WTC11 (cell line): ENCODE measurements at regions of chr16 and their contacts with region 1.

Region 1: GRCh38 chr16:85253084-85253941 is 141.0 kb upstream of the CIBAR2 start:
- DNase-seq: peak; percentile 87
- ATAC-seq: peak; percentile 91
- H3K4me3 Mint-ChIP-seq: no peak overlapping the region
- H3K27ac Mint-ChIP-seq: no peak overlapping the region
- H3K4me1 Mint-ChIP-seq: no peaks in the 10 kb centered on the region
- H3K27me3 Mint-ChIP-seq: no peaks in the 10 kb centered on the region; the same call in 1 of the 2 replicates
- CTCF ChIP-seq: peak; percentile 99

Region 2: GRCh38 chr16:85004559-85005205 is 248.6 kb before region 1 on chr16:
- CTCF ChIA-PET with region 1: no interaction called
- POLR2A ChIA-PET with region 1: no interaction called
- DNase-seq: no peak
- ATAC-seq: no peak
- H3K4me3 Mint-ChIP-seq: no peak overlapping the region
- H3K27ac Mint-ChIP-seq: peak overlapping the region; percentile 30; the same call in 1 of the 2 replicates
- H3K4me1 Mint-ChIP-seq: peaks cover 32% of the 10 kb centered on the region
- H3K27me3 Mint-ChIP-seq: no peaks in the 10 kb centered on the region
- CTCF ChIP-seq: no peak

Region 3: GRCh38 chr16:85187002-85187401 is 66.3 kb before region 1 on chr16:
- CTCF ChIA-PET with region 1: interaction called, 18 read pairs
- POLR2A ChIA-PET with region 1: no interaction called
- DNase-seq: no peak
- ATAC-seq: peak; percentile 55
- H3K4me3 Mint-ChIP-seq: no peak overlapping the region
- H3K27ac Mint-ChIP-seq: peak overlapping the region; percentile 78; the same call in 1 of the 2 replicates
- H3K4me1 Mint-ChIP-seq: 0 out of 2 replicates have a peak, but pooled peaks cover 9% of the 10 kb centered on the region
- H3K27me3 Mint-ChIP-seq: peaks cover 2% of the 10 kb centered on the region; the same call in 1 of the 2 replicates
- CTCF ChIP-seq: no peak

Region 4: DNA sequence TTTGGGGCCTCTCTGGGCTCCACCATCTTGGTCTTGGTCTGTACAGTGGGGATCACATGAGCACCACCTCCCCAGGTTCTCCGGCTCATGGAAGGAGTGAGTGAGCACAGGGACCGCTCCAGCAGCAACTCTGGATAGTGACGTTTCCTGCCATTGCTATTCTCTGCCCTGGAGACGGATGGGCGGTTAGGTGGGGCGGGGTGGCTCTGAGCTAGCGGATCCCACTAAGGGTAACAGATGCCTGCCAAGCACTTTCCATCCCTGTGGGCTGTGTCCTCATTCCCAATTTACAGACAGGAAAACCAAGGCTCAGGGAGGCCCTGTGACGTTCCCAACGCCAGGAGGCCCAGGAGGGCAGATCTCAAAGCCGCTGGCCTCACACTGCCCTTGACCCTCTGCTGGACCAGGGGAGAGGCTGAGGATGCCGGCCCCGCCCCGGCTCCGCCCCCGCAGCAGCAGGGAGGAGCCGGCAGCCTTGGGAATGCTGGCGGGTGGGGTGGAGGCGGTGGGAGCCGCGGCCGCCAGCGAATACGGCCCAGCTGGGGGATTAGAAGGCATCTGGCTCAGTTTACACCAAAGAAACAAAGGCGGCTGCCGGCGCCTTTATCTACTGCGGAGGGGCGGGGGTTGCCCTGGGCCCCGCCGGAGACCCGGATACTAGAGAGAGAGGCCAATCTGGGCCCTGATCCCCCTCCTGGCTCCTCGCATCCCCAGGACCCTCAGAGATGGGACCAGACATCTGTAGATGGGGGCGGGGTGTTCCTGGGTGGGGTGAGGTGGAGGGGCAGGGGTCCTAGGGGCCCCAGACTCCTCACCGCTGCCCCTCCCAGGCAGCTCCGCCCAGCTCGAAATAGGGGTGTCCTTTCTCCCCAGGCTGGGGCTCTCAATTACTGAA is 18.8 kb before region 1 on chr16:
- CTCF ChIA-PET with region 1: interaction called, 37 read pairs
- POLR2A ChIA-PET with region 1: interaction called, 3 read pairs
- DNase-seq: peak; percentile 92
- ATAC-seq: peak; percentile 70
- H3K4me3 Mint-ChIP-seq: peak overlapping the region; percentile 58
- H3K27ac Mint-ChIP-seq: peak overlapping the region; percentile 87
- H3K4me1 Mint-ChIP-seq: peaks cover 37% of the 10 kb centered on the region
- H3K27me3 Mint-ChIP-seq: no peaks in the 10 kb centered on the region; the same call in 1 of the 2 replicates
- CTCF ChIP-seq: no peak

Region 5: DNA sequence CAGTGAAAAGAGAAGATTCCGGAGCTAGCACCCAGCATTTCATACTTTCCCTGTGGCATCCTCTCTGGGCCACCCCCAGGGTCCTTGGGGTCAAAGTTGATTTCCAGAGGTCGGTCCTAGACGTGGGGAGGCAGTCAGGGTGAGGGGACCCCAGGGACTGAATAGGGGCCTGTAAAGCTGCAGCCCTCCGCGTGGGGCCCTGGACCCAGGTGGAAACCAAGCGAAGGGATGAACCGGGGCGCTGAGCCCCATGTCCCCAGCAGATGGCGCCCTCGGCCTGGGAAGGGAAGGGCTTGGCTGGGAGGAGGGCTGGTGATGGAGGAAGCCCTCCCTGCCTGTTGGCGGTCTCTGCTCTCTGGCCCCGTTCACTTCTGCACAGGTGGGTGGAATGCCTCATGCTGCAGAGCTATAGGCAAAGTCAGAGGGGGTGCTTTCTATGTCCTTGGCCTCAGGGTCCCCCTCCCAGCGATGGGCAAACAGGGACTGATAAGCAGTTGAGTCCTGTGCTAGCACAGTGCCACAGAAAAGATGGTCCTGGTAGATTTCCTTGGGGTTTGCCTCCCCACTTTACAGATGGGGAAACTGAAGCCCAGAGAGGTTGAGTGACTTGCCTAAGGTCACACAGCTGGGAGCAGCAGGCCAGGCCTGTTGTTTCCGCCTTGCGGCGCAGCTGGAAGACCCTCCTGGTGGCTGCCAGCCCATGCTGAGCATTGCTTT is 22.4 kb after region 1 on chr16:
- CTCF ChIA-PET with region 1: interaction called, 20 read pairs
- POLR2A ChIA-PET with region 1: interaction called, 5 read pairs
- DNase-seq: peak; percentile 93
- ATAC-seq: peak; percentile 85
- H3K4me3 Mint-ChIP-seq: no peak overlapping the region
- H3K27ac Mint-ChIP-seq: no peak overlapping the region
- H3K4me1 Mint-ChIP-seq: peaks cover 26% of the 10 kb centered on the region
- H3K27me3 Mint-ChIP-seq: no peaks in the 10 kb centered on the region
- CTCF ChIP-seq: peak; percentile 66

Region 6: GRCh38 chr16:85330694-85331188 is 77.4 kb after region 1 on chr16:
- CTCF ChIA-PET with region 1: interaction called, 14 read pairs
- POLR2A ChIA-PET with region 1: no interaction called
- DNase-seq: no peak
- ATAC-seq: peak; percentile 32
- H3K4me3 Mint-ChIP-seq: peak overlapping the region; percentile 53
- H3K27ac Mint-ChIP-seq: peak overlapping the region; percentile 47; the same call in 1 of the 2 replicates
- H3K4me1 Mint-ChIP-seq: peaks cover 73% of the 10 kb centered on the region
- H3K27me3 Mint-ChIP-seq: peaks cover 52% of the 10 kb centered on the region
- CTCF ChIP-seq: no peak

Region 7: GRCh38 chr16:85437166-85438055 is 184.1 kb after region 1 on chr16:
- CTCF ChIA-PET with region 1: interaction called, 12 read pairs
- POLR2A ChIA-PET with region 1: no interaction called
- DNase-seq: no peak
- ATAC-seq: peak; percentile 21
- H3K4me3 Mint-ChIP-seq: peak overlapping the region; percentile 50
- H3K27ac Mint-ChIP-seq: peak overlapping the region; percentile 51; the same call in 1 of the 2 replicates
- H3K4me1 Mint-ChIP-seq: peaks cover 39% of the 10 kb centered on the region
- H3K27me3 Mint-ChIP-seq: no peaks in the 10 kb centered on the region
- CTCF ChIP-seq: no peak